ENCODE measurements at regions of chr3 and their contacts with region 1.

Region 1: GRCh38 chr3:151425627-151426335 is 35.1 kb downstream of the IGSF10 start:
- DNase-seq: no peak
- H3K4me3 ChIP-seq: peak overlapping the region; percentile 32
- H3K27ac ChIP-seq: peak overlapping the region; percentile 29
- H3K4me1 ChIP-seq: peaks cover 16% of the 10 kb centered on the region
- CTCF ChIP-seq: peak; percentile 91

Region 2: DNA sequence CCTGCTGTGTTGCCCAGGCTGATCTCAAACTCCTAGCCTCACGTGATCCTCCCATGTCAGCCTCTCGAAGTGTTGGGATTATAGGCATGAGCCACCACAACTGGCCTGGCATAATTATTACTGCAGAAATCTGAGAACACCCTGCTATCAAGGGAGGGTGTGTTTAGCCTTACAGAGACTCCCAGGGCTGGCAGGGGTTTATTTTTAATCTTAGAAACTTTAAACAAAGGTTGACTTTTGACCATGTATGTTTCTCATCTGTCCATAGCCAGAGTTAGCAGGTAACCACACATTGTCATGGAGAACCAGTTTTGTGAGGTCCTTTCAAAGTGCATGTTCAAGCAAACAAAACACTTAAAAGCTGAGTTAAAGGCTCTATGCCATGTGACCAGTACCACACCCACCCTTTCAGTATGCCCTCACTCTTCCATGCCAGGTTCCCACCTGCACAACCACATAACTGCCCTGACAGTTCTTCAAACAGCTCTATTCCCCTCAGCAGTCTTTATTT is 674.0 kb before region 1 on chr3:
- CTCF ChIA-PET with region 1: no interaction called
- POLR2A ChIA-PET with region 1: no interaction called
- intact Hi-C with region 1: no loop called
- DNase-seq: no peak
- H3K4me3 ChIP-seq: no peak overlapping the region
- H3K27ac ChIP-seq: no peak overlapping the region
- H3K4me1 ChIP-seq: no peaks in the 10 kb centered on the region
- CTCF ChIP-seq: no peak

Region 3: DNA sequence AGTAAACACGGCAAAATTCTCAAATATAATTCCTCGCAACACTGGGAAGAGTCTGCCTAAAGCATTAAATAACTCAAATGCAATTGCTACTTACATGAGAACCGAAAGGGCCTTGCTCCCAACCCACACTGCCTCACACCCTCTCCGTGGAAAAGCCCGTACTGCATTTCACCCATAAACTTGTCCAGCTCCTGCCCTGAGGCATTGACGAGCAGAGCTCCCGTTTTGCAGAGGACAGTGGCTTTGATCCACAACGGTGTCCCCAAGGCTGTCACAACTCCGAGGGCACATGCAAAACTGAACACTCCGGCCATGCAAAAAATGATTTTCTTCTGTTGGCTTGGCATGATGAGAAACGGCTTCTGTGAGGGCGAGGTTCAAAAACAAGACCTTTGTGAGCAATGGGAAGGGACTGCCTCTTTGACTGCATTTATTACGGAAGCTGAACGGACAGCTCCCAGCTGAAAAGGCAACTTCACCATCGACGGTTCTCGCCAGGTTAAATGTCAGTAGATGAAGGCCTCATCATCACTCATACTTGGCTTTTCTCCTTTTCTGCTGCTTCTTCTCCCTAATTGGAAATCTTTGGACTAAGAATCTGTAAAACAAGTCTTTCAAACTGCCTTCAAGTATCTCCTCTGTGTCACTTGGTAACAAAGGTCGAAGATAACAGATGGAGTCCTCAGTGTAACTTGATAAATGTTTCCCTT is 453.3 kb before region 1 on chr3 and contains the start of gene CLRN1:
- CTCF ChIA-PET with region 1: no interaction called
- POLR2A ChIA-PET with region 1: no interaction called
- intact Hi-C with region 1: no loop called
- DNase-seq: no peak
- H3K4me3 ChIP-seq: no peak within 1 kb of the TSS
- H3K27ac ChIP-seq: no peak within 1 kb of the TSS
- H3K4me1 ChIP-seq: no peaks in the 10 kb centered on the region
- CTCF ChIP-seq: no peak
- total RNA-seq, gene CLRN1: not detected in 2 replicates

Region 4: DNA sequence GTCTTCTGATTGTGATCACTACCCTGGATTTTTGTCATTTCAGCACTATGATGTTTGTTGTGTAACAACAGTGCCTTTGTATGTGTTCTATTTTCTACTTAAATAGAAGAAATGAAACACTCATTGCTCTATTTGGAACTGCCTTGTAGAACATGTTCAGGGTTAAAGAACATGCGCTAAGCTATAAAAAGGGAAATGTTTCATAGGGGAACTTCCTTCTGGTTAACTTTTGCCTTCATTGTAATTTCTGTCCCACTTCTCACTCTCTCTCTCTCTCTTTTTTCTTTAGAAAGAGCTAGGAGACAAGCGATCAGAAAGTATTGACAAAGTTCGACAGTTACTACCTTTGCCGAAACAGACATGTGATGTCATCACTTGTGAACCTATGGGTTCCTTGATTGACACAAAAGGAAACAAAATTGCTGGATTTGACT is 41.0 kb before region 1 on chr3 and contains the start of gene P2RY12:
- CTCF ChIA-PET with region 1: interaction called, 3 read pairs
- POLR2A ChIA-PET with region 1: interaction called, 5 read pairs
- intact Hi-C with region 1: loop called (anchors 5 kb)
- DNase-seq: peak; percentile 35
- H3K4me3 ChIP-seq: peak within 1 kb of the TSS; percentile 50
- H3K27ac ChIP-seq: peak within 1 kb of the TSS; percentile 73
- H3K4me1 ChIP-seq: peaks cover 39% of the 10 kb centered on the region
- CTCF ChIP-seq: no peak
- total RNA-seq, gene P2RY12: 0.19 TPM in 1 of 2 replicates, not detected in the other

Region 5: GRCh38 chr3:151412989-151413388 is 12.8 kb before region 1 on chr3:
- CTCF ChIA-PET with region 1: no interaction called
- POLR2A ChIA-PET with region 1: interaction called, 10 read pairs
- intact Hi-C with region 1: no loop called
- DNase-seq: no peak
- H3K4me3 ChIP-seq: no peak overlapping the region
- H3K27ac ChIP-seq: no peak overlapping the region
- H3K4me1 ChIP-seq: no peaks in the 10 kb centered on the region
- CTCF ChIP-seq: peak; percentile 56

Measured in OCI-LY7 (cell line).